Mammary epithelial cell (primary cell): ENCODE measurements at regions of chr13 and their contacts with region 1.

Region 1: DNA sequence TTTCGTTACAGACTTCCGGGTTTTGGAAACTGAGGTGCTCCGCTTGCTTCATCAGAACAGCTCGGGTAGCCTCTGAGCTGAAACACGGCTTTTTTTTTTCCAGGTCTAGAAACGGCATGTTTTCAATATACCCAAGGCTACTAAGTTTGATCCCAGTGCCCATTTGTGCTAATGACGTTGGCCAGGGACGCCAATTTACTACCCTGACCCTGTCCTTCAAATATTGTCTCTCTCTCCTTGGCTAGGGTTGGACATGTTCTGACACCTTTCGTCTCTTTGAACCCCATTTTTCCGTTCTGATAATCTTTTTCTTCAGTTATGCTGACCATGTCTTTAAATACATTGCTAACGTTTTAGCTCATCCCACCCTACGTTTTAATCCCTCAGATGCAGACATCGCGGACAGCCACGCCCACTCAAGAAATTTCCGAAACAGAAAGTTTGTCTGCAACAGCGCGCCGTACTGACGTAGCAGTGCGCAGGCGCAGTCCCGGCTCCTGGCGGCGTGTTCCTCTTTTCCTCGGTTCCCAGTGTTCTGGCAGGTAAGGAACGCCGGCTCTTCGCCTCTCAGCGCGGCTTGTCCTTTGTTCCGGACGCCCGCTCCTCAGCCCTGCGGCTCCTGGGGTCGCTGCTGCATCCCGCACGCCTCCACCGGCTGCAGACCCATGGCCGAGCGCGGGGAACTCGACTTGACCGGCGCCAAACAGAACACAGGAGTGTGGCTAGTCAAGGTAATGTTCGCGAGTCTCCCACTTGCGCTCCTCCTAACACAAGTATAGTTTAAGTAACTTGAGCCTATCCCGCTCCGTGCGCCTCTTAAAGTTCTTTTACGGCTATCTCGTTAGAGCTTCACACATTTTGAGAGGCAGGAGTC is at the start of gene GTF2F2:
- DNase-seq: peak; percentile 85
- H3K4me3 ChIP-seq: peak within 1 kb of the TSS; percentile 75 to 93 (median 82)
- H3K27ac ChIP-seq: peak within 1 kb of the TSS; percentile 87
- H3K4me1 ChIP-seq: peaks cover 13% of the 10 kb centered on the region
- H3K27me3 ChIP-seq: no peaks in the 10 kb centered on the region
- CTCF ChIP-seq: no peak
- total RNA-seq, gene GTF2F2: 26.5 to 48.9 TPM

Region 2: DNA sequence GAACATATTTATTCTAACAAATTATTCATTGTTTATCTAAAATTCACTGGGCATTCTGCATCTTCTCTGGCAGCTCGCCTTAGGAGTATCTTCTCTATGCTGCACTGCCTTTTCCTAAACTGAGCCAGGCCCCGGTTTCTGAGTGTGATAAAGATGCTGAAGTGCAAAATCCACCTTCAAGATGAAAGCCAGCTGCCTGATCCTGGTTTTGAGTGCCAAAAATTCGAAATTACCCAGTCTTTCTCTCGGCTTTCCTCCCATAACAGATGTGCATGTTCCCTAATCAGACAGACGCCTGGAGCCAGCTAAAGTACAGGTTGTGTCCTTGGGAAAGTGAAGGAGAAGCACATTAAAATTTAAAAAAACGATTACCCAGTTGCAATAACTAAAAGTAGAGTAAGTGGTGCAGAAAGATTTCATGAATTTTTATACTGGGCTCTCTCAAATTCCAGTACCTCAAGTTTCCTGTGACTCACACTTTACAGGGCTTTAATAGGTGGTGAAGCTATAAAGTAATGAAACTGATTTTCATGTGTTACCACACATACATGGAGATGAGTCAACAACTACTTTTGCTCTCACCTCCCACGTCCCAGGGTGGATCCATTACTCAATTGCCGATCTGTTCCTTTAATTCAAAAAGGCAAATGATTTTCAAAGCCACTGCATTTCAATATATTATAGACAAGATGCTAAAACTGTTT is 64.9 kb before region 1 on chr13:
- CTCF ChIA-PET with region 1: no interaction called
- dilution Hi-C with region 1: no loop called
- in situ Hi-C with region 1: no loop called
- intact Hi-C with region 1: loop called (anchors 2 kb)
- DNase-seq: peak; percentile 94
- H3K4me3 ChIP-seq: peak overlapping the region in 2 of 3 experiments; percentile 7 to 24
- H3K27ac ChIP-seq: peak overlapping the region; percentile 95
- H3K4me1 ChIP-seq: peaks cover 26% of the 10 kb centered on the region
- H3K27me3 ChIP-seq: no peaks in the 10 kb centered on the region
- CTCF ChIP-seq: no peak

Region 3: DNA sequence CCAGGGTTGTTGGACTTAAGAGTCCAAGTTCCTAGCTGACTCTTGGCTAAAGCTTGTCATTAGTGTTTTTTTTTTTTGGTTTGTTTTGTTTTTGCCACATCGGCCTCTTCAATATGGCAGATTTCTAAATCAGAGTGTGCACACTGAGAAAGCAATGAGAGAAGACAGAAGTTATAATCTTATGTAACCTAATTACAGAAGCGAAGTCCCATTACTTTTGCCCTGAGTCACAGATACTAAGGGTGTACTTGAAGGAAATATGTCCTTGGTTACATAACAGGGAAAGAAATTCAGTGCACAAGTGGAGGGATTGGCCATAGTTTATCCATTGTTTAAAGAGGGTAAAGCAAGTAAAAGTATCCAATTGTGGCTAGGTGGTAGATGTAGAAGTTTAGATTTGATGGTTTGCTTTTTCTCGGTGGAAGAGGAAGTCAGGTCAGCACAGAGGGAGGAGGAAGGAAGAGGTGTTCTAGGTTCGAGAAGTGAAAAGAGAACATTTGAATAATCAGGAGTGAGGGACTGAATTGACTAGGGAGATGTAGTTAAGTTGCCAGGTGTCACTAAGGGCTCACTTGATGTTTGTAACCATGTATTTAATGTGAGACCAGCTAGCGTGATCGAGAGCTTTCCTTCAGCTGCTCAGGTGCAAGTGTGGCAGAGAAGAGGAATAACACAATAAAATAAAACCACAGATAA is 12.3 kb after region 1 on chr13:
- CTCF ChIA-PET with region 1: no interaction called
- dilution Hi-C with region 1: no loop called
- in situ Hi-C with region 1: no loop called
- intact Hi-C with region 1: no loop called
- DNase-seq: no peak
- H3K4me3 ChIP-seq: no peak overlapping the region
- H3K27ac ChIP-seq: no peak overlapping the region
- H3K4me1 ChIP-seq: peaks cover 13% of the 10 kb centered on the region
- H3K27me3 ChIP-seq: no peaks in the 10 kb centered on the region
- CTCF ChIP-seq: no peak

Region 4: DNA sequence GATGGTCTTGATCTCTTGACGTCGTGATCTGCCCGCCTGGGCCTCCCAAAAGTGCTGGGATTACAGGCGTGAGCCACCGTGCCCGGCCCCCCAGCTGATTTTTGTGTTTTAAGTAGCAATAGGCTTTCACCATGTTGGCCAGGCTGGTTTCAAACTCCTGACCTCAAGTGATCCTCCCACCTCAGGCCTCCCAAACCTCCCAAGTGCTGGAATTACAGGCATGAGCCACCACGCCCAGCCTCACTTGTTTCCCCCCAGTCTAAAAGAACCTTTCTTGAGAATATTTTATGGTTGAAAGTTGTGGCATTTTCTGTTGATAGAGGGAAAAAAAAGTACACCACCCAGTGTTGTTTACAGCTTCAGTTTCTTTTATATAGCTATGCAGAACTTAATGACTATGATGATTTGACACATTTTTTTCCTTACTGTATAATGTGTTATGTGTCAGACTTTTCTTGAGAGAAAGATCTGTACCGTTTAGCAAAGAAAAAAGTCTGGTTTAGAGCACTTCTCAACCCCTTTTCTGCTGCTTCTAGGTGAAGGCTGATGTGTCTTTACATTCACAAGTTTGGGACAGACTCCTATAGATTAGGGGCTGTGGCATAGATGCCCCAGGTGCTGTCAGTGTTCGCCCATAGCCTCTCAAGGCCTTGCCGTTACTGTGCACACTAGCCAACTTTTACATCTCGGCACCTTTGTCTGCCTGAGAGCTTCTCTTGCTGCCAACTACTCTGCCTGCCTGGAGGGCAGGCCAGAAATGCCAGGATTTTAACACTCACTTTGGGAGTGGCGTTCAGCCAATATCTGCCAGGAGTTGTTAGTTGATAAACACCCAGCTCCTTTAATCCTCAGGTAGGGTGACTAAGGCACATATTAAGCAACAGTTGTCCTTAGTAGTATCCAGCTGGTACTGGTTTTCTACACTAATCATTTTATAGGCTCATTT is 47.7 kb after region 1 on chr13:
- CTCF ChIA-PET with region 1: no interaction called
- dilution Hi-C with region 1: no loop called
- in situ Hi-C with region 1: no loop called
- intact Hi-C with region 1: loop called (anchors 1 kb)
- DNase-seq: peak; percentile 98
- H3K4me3 ChIP-seq: no peak overlapping the region
- H3K27ac ChIP-seq: peak overlapping the region; percentile 81
- H3K4me1 ChIP-seq: peaks cover 17% of the 10 kb centered on the region
- H3K27me3 ChIP-seq: no peaks in the 10 kb centered on the region
- CTCF ChIP-seq: no peak

Region 5: GRCh38 chr13:45194081-45194939 is 74.1 kb after region 1 on chr13:
- CTCF ChIA-PET with region 1: no interaction called
- dilution Hi-C with region 1: loop called (anchors 5 kb)
- in situ Hi-C with region 1: no loop called
- intact Hi-C with region 1: loop called (anchors 5 kb)
- DNase-seq: peak; percentile 69
- H3K4me3 ChIP-seq: peak overlapping the region; percentile 36 to 94 (median 72)
- H3K27ac ChIP-seq: peak overlapping the region; percentile 68
- H3K4me1 ChIP-seq: peaks cover 59% of the 10 kb centered on the region
- H3K27me3 ChIP-seq: no peaks in the 10 kb centered on the region
- CTCF ChIP-seq: peak; percentile 84 to 88

Region 6: GRCh38 chr13:45239396-45239795 is 119.2 kb after region 1 on chr13:
- CTCF ChIA-PET with region 1: no interaction called
- dilution Hi-C with region 1: no loop called
- in situ Hi-C with region 1: no loop called
- intact Hi-C with region 1: loop called (anchors 5 kb)
- DNase-seq: peak; percentile 88
- H3K4me3 ChIP-seq: peak overlapping the region in 1 of 3 experiments; percentile 13
- H3K27ac ChIP-seq: peak overlapping the region; percentile 86
- H3K4me1 ChIP-seq: peaks cover 62% of the 10 kb centered on the region
- H3K27me3 ChIP-seq: no peaks in the 10 kb centered on the region
- CTCF ChIP-seq: no peak

Region 7: GRCh38 chr13:45402641-45403040 is 282.4 kb after region 1 on chr13:
- CTCF ChIA-PET with region 1: no interaction called
- dilution Hi-C with region 1: no loop called
- in situ Hi-C with region 1: no loop called
- intact Hi-C with region 1: no loop called
- DNase-seq: no peak
- H3K4me3 ChIP-seq: no peak overlapping the region
- H3K27ac ChIP-seq: no peak overlapping the region
- H3K4me1 ChIP-seq: no peaks in the 10 kb centered on the region
- H3K27me3 ChIP-seq: no peaks in the 10 kb centered on the region
- CTCF ChIP-seq: no peak